Adrenal gland (tissue), 19 donors: ENCODE measurements at regions of chr16 and their contacts with region 1.

Region 1: DNA sequence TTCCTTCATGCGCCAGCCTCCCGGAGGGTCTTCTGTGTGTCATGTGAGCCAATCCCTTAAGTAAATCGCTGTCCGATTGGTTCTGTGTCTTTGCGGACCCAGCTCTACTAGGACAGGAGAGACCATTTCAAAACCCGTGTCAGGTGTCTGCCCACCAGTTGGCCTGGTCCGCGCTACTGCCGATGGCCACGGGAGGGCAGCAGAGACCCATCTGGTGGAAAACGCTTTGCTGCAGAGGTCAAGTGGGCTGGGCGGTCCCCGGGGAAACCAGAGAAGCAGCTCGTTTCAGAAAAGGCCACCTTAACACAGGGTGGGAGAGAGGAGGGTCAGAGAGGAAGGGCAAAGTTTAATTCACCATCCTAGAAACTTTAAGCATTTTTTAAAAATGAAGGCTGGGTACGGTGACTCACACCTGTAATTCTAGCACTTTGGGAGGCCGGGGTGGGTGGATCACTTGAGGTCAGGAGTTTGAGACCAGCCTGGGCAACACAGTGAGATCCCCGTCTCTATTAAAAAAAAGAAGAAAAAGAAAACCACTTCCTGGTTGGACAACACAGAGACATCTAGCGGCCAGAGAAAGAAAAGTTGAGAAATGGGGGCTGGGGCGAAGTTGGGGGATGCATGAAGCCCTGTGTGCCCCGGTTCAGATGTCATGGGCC is 2.8 kb upstream of the CIBAR2 start:
- DNase-seq: peak; percentile 84 to 96 (median 90)
- H3K4me3 ChIP-seq: peak overlapping the region in 1 of 4 donors; percentile 20
- H3K27ac ChIP-seq: peak overlapping the region in 2 of 5 donors; percentile 56 to 57
- H3K4me1 ChIP-seq: no peaks in the 10 kb centered on the region
- H3K27me3 ChIP-seq: no peaks in the 10 kb centered on the region
- CTCF ChIP-seq: peak; percentile 97 to 99 (median 98)
- POLR2A ChIP-seq: no peak

Region 2: DNA sequence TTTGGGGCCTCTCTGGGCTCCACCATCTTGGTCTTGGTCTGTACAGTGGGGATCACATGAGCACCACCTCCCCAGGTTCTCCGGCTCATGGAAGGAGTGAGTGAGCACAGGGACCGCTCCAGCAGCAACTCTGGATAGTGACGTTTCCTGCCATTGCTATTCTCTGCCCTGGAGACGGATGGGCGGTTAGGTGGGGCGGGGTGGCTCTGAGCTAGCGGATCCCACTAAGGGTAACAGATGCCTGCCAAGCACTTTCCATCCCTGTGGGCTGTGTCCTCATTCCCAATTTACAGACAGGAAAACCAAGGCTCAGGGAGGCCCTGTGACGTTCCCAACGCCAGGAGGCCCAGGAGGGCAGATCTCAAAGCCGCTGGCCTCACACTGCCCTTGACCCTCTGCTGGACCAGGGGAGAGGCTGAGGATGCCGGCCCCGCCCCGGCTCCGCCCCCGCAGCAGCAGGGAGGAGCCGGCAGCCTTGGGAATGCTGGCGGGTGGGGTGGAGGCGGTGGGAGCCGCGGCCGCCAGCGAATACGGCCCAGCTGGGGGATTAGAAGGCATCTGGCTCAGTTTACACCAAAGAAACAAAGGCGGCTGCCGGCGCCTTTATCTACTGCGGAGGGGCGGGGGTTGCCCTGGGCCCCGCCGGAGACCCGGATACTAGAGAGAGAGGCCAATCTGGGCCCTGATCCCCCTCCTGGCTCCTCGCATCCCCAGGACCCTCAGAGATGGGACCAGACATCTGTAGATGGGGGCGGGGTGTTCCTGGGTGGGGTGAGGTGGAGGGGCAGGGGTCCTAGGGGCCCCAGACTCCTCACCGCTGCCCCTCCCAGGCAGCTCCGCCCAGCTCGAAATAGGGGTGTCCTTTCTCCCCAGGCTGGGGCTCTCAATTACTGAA is 119.5 kb after region 1 on chr16:
- intact Hi-C with region 1: loop called in 1 of 2 experiments (anchors 5 kb)
- DNase-seq: peak; percentile 74 to 90 (median 89)
- H3K4me3 ChIP-seq: peak overlapping the region in 2 of 4 donors; percentile 13 to 62
- H3K27ac ChIP-seq: peak overlapping the region; percentile 32 to 85 (median 78)
- H3K4me1 ChIP-seq: peaks cover 28 to 53% of the 10 kb centered on the region in 2 donors
- H3K27me3 ChIP-seq: no peaks in the 10 kb centered on the region
- CTCF ChIP-seq: peak in 3 of 6 experiments; percentile 15 to 29 (median 28)
- POLR2A ChIP-seq: peak in 1 of 2 donors; percentile 55

Region 3: GRCh38 chr16:85253084-85253941 is 138.3 kb after region 1 on chr16:
- intact Hi-C with region 1: loop called in 1 of 2 experiments (anchors 10 kb)
- DNase-seq: peak; percentile 52 to 75 (median 63)
- H3K4me3 ChIP-seq: no peak overlapping the region
- H3K27ac ChIP-seq: no peak overlapping the region
- H3K4me1 ChIP-seq: peaks cover 0 to 10% of the 10 kb centered on the region in 2 donors
- H3K27me3 ChIP-seq: no peaks in the 10 kb centered on the region
- CTCF ChIP-seq: peak; percentile 74 to 96 (median 84)
- POLR2A ChIP-seq: no peak